ENCODE measurements at regions of chr7 and their contacts with region 1.

Region 1: GRCh38 chr7:55572378-55573233 is at the start of gene VOPP1:
- DNase-seq: peak; percentile 25 to 88 (median 57)
- ATAC-seq: peak; percentile 44
- H3K4me3 ChIP-seq: peak within 1 kb of the TSS; percentile 74 to 80
- H3K4me3 Mint-ChIP-seq: peak within 1 kb of the TSS; percentile 92
- H3K27ac ChIP-seq: peak within 1 kb of the TSS; percentile 66 to 80
- H3K27ac Mint-ChIP-seq: peak within 1 kb of the TSS; percentile 91
- H3K4me1 ChIP-seq: peaks cover 48% of the 10 kb centered on the region
- H3K4me1 Mint-ChIP-seq: peaks cover 56% of the 10 kb centered on the region
- H3K27me3 ChIP-seq: no peaks in the 10 kb centered on the region
- H3K27me3 Mint-ChIP-seq: no peaks in the 10 kb centered on the region
- CTCF ChIP-seq: no peak
- total RNA-seq, gene VOPP1: 38.7 to 38.9 TPM

Region 2: GRCh38 chr7:55469271-55469681 is 103.3 kb before region 1 on chr7:
- CTCF ChIA-PET with region 1: interaction called, 14 read pairs
- POLR2A ChIA-PET with region 1: interaction called, 11 read pairs
- intact Hi-C with region 1: loop called in 1 of 2 experiments (anchors 1 kb)
- DNase-seq: peak in 8 of 9 experiments; percentile 19 to 74 (median 54)
- ATAC-seq: peak; percentile 72
- H3K4me3 ChIP-seq: peak overlapping the region in 1 of 2 experiments; percentile 4
- H3K4me3 Mint-ChIP-seq: peak overlapping the region; percentile 54
- H3K27ac ChIP-seq: peak overlapping the region; percentile 31 to 62
- H3K27ac Mint-ChIP-seq: peak overlapping the region; percentile 96
- H3K4me1 ChIP-seq: peaks cover 63% of the 10 kb centered on the region
- H3K4me1 Mint-ChIP-seq: peaks cover 67% of the 10 kb centered on the region
- H3K27me3 ChIP-seq: no peaks in the 10 kb centered on the region
- H3K27me3 Mint-ChIP-seq: no peaks in the 10 kb centered on the region
- CTCF ChIP-seq: no peak

Region 3: GRCh38 chr7:55593515-55594318 is 21.1 kb after region 1 on chr7:
- CTCF ChIA-PET with region 1: interaction called, 6 read pairs
- POLR2A ChIA-PET with region 1: no interaction called
- intact Hi-C with region 1: loop called in 1 of 2 experiments (anchors 2 kb)
- DNase-seq: peak; percentile 40 to 82 (median 68)
- ATAC-seq: peak; percentile 51
- H3K4me3 ChIP-seq: no peak overlapping the region
- H3K4me3 Mint-ChIP-seq: no peak overlapping the region
- H3K27ac ChIP-seq: no peak overlapping the region
- H3K27ac Mint-ChIP-seq: no peak overlapping the region
- H3K4me1 ChIP-seq: peaks cover 5% of the 10 kb centered on the region
- H3K4me1 Mint-ChIP-seq: peaks cover 7% of the 10 kb centered on the region
- H3K27me3 ChIP-seq: peaks cover 0 to 3% of the 10 kb centered on the region in 2 experiments
- H3K27me3 Mint-ChIP-seq: peaks cover 2% of the 10 kb centered on the region
- CTCF ChIP-seq: peak; percentile 73

Region 4: DNA sequence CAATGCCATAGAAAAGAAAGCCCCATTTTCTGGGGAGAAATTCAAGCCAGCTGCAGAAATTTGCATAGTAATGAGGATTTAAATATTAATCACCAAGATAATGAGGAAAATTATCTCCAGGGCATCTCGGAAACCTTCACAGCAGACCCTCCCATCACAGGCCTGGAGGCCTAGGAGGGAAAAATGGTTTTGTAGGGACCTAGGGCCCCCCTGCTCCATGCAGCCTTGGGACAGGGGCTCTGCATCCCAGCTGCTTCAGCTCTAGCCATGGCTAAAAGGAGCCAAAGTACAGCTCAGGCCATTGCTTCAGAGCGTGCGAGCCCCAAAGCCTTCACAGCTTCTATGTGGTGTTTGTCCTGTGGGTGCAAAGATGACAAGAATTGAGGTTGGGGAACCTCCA is 46.3 kb after region 1 on chr7:
- CTCF ChIA-PET with region 1: no interaction called
- POLR2A ChIA-PET with region 1: no interaction called
- intact Hi-C with region 1: no loop called
- DNase-seq: no peak
- ATAC-seq: no peak
- H3K4me3 ChIP-seq: no peak overlapping the region
- H3K4me3 Mint-ChIP-seq: no peak overlapping the region
- H3K27ac ChIP-seq: no peak overlapping the region
- H3K27ac Mint-ChIP-seq: no peak overlapping the region
- H3K4me1 ChIP-seq: no peaks in the 10 kb centered on the region
- H3K4me1 Mint-ChIP-seq: no peaks in the 10 kb centered on the region
- H3K27me3 ChIP-seq: no peaks in the 10 kb centered on the region
- H3K27me3 Mint-ChIP-seq: peaks cover 20% of the 10 kb centered on the region
- CTCF ChIP-seq: no peak

Region 5: GRCh38 chr7:55778631-55779030 is 206.0 kb after region 1 on chr7:
- CTCF ChIA-PET with region 1: no interaction called
- POLR2A ChIA-PET with region 1: no interaction called
- intact Hi-C with region 1: no loop called
- DNase-seq: no peak
- ATAC-seq: no peak
- H3K4me3 ChIP-seq: no peak overlapping the region
- H3K4me3 Mint-ChIP-seq: no peak overlapping the region
- H3K27ac ChIP-seq: no peak overlapping the region
- H3K27ac Mint-ChIP-seq: no peak overlapping the region
- H3K4me1 ChIP-seq: no peaks in the 10 kb centered on the region
- H3K4me1 Mint-ChIP-seq: no peaks in the 10 kb centered on the region
- H3K27me3 ChIP-seq: no peaks in the 10 kb centered on the region
- H3K27me3 Mint-ChIP-seq: no peaks in the 10 kb centered on the region
- CTCF ChIP-seq: no peak

Region 6: DNA sequence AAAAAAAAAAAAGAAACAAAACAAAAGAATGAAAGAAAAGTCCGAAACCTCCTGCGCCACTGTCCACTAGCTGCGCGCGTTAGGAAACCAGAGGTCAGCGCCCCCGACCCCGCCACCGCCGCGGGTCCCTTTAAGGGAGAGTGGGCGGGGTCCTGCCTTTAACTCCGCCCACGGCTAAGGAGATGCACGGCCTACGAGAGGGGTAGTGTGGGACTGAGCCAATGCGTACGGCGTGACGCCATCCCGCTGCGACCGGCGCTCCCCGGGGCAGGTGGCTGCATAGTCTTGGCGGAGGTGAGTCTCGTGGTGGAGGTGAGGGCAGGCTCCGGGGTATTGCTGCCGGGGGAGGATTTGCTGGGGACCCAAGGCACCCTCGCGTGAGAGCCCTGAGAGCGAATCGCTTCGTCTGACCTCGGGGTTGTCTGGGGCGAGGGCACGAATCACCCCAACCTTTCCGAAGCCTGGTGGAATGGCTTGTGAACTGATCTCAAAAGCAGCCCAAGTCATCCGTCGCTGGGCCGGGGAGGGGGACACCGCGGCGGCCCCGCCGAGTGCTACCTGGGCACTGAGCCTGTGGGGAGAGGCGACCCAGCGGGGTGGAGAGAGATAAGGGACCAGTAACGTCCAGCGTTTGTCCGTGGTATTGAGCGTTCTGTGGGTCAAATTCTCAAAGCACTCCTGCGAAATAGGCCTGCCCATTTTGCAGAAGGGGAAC is 379.2 kb after region 1 on chr7 and contains the start of gene MRPS17:
- CTCF ChIA-PET with region 1: no interaction called
- POLR2A ChIA-PET with region 1: no interaction called
- intact Hi-C with region 1: loop called in 1 of 2 experiments (anchors 5 kb)
- DNase-seq: peak; percentile 82 to 96 (median 93)
- ATAC-seq: peak; percentile 99
- H3K4me3 ChIP-seq: peak within 1 kb of the TSS; percentile 71 to 86
- H3K4me3 Mint-ChIP-seq: peak within 1 kb of the TSS; percentile 94
- H3K27ac ChIP-seq: peak within 1 kb of the TSS; percentile 78 to 91
- H3K27ac Mint-ChIP-seq: peak within 1 kb of the TSS; percentile 97
- H3K4me1 ChIP-seq: peaks cover 6% of the 10 kb centered on the region
- H3K4me1 Mint-ChIP-seq: peaks cover 26% of the 10 kb centered on the region
- H3K27me3 ChIP-seq: no peaks in the 10 kb centered on the region
- H3K27me3 Mint-ChIP-seq: no peaks in the 10 kb centered on the region
- CTCF ChIP-seq: no peak
- total RNA-seq, gene MRPS17: 7.8 to 8.9 TPM

Region 7: DNA sequence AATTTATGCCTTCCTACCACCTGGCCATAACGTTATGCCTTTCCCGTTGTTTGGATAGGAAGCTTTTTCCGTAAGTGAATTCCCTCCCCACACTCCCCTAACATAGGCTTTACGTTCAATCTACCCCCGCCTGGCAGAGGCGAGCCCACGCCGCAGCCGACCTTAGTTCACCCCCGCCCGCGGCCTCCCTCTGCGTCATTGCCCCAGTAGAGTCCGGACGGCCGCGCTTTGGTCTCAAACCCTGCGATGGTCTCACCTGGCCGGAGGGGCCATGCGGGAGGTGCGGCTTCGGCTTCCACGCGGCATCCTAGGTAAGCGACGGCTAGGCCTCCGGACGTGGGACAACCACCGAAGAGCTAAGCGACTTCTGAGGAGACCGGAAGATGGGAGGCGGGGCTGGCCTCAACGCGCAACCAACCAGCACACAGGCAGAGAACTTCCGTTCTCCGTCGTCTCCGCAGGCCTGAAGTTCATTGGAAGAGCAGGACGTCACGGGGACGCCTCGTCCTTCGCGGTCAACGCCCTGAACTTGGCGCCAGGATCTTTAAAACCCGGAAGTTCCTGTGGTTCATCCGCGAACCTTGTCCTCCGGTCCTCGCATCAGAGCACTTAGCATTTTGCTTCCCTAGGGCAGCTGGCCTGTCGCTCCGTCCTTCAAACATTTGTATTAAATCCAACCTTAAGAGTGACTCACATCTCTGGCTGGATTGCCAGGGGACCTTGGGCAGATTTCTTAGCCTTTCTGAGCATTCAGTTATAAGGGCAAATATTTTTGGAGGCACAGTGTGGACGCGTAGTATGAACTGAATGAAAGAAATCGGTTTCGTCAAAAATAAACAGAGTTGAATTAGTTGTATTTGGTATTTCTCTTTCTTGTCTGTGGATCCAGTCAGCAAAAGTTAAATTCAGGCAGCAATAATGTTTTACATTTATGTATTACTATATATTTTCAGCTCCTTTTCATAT is 533.8 kb after region 1 on chr7 and contains the start of gene CHCHD2:
- CTCF ChIA-PET with region 1: no interaction called
- POLR2A ChIA-PET with region 1: no interaction called
- intact Hi-C with region 1: loop called in 1 of 2 experiments (anchors 5 kb)
- DNase-seq: peak; percentile 87 to 99 (median 91)
- ATAC-seq: peak; percentile 96
- H3K4me3 ChIP-seq: peak within 1 kb of the TSS; percentile 75 to 91
- H3K4me3 Mint-ChIP-seq: peak within 1 kb of the TSS; percentile 95
- H3K27ac ChIP-seq: peak within 1 kb of the TSS; percentile 90 to 95
- H3K27ac Mint-ChIP-seq: peak within 1 kb of the TSS; percentile 98
- H3K4me1 ChIP-seq: peaks cover 20% of the 10 kb centered on the region
- H3K4me1 Mint-ChIP-seq: peaks cover 33% of the 10 kb centered on the region
- H3K27me3 ChIP-seq: no peaks in the 10 kb centered on the region
- H3K27me3 Mint-ChIP-seq: peaks cover 2% of the 10 kb centered on the region
- CTCF ChIP-seq: no peak
- total RNA-seq, gene CHCHD2: 283 to 294 TPM

Measured in CD8-positive, alpha-beta T cell (primary cell).